HepG2 (cell line): ENCODE measurements at regions of chr2 and their contacts with region 1.

Region 1: GRCh38 chr2:201882353-201883090 is 76.2 kb downstream of the CDK15 start:
- DNase-seq: no peak
- ATAC-seq: no peak
- H3K4me3 ChIP-seq: no peak overlapping the region
- H3K27ac ChIP-seq: no peak overlapping the region
- H3K4me1 ChIP-seq: no peaks in the 10 kb centered on the region
- H3K27me3 ChIP-seq: peaks cover 2 to 14% of the 10 kb centered on the region in 2 experiments; a peak in 3 of 5 replicates
- CTCF ChIP-seq: no peak
- EP300 ChIP-seq: no peak
- POLR2A ChIP-seq: no peak
- RAD21 ChIP-seq: no peak

Region 2: DNA sequence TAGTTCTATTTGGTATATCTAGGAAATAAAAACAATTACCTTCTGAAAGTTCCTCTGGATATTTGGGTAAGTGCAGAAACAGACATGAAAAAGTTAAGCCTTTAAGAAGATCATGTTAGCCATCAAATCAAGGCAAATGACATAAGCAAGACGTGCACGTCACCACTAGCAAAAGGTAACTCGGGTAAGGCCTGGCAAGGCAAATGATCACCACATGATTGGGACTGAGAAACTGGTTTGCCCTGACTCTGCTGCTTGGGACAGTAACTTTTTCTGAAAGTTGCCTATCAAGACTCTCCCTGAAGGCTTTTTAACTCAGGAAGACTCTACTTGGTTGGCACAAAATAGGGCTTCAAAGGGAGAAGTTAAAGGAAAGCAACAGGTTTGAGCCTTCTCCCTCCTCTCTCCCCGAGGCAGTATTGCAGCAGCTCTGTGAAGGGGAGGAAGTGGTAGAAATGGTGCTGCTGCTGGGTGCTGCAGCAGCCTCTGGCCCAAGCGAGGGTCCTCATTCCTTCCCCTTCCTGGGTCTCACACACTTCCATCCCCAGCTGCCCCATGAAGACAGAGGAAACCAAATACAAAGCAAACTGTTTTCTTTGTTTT is 222.1 kb before region 1 on chr2:
- CTCF ChIA-PET with region 1: no interaction called
- POLR2A ChIA-PET with region 1: no interaction called
- in situ Hi-C with region 1: no loop called
- intact Hi-C with region 1: loop called (anchors 10 kb)
- DNase-seq: no peak
- ATAC-seq: peak; percentile 64; the same call in 2 of the 3 replicates
- H3K4me3 ChIP-seq: no peak overlapping the region
- H3K27ac ChIP-seq: no peak overlapping the region
- H3K4me1 ChIP-seq: no peaks in the 10 kb centered on the region
- H3K27me3 ChIP-seq: peaks cover 0 to 20% of the 10 kb centered on the region in 2 experiments; a peak in 3 of 5 replicates
- CTCF ChIP-seq: no peak
- EP300 ChIP-seq: no peak
- POLR2A ChIP-seq: no peak
- RAD21 ChIP-seq: no peak

Region 3: GRCh38 chr2:201807452-201807999 is 75.0 kb before region 1 on chr2:
- CTCF ChIA-PET with region 1: no interaction called
- POLR2A ChIA-PET with region 1: no interaction called
- in situ Hi-C with region 1: no loop called
- intact Hi-C with region 1: no loop called
- DNase-seq: no peak
- ATAC-seq: no peak
- H3K4me3 ChIP-seq: no peak overlapping the region
- H3K27ac ChIP-seq: no peak overlapping the region
- H3K4me1 ChIP-seq: no peaks in the 10 kb centered on the region
- H3K27me3 ChIP-seq: peaks cover 1 to 19% of the 10 kb centered on the region in 2 experiments; a peak in 3 of 5 replicates
- CTCF ChIP-seq: no peak
- EP300 ChIP-seq: no peak
- POLR2A ChIP-seq: no peak
- RAD21 ChIP-seq: no peak

Region 4: GRCh38 chr2:201839727-201840126 is 42.8 kb before region 1 on chr2:
- CTCF ChIA-PET with region 1: no interaction called
- POLR2A ChIA-PET with region 1: no interaction called
- in situ Hi-C with region 1: no loop called
- intact Hi-C with region 1: no loop called
- DNase-seq: no peak
- ATAC-seq: no peak
- H3K4me3 ChIP-seq: no peak overlapping the region
- H3K27ac ChIP-seq: no peak overlapping the region
- H3K4me1 ChIP-seq: no peaks in the 10 kb centered on the region
- H3K27me3 ChIP-seq: no peaks in the 10 kb centered on the region
- CTCF ChIP-seq: no peak
- EP300 ChIP-seq: no peak
- POLR2A ChIP-seq: no peak
- RAD21 ChIP-seq: no peak

Region 5: DNA sequence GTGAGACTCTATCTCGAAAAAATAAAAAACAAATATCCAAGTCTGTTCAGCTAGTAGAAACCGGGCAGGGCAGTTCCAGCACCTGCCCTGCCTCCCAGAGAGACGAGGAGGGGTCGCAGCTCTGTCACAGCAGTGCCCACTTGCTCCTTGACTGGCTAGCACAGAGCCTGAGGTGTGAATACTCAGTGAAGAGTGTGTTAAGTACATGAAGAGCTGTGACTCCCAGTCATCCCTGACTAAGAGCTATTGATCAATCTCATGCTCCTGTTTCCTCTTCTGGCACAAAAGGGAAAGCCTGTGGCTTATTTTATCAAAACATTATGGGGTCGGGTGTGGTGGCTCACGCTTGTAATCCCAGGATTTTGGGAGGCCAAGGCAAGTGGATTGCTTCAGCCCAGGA is 68.1 kb after region 1 on chr2:
- CTCF ChIA-PET with region 1: no interaction called
- POLR2A ChIA-PET with region 1: no interaction called
- in situ Hi-C with region 1: no loop called
- intact Hi-C with region 1: no loop called
- DNase-seq: no peak
- ATAC-seq: no peak
- H3K4me3 ChIP-seq: no peak overlapping the region
- H3K27ac ChIP-seq: no peak overlapping the region
- H3K4me1 ChIP-seq: no peaks in the 10 kb centered on the region
- H3K27me3 ChIP-seq: peaks cover 2 to 10% of the 10 kb centered on the region in 2 experiments; a peak in 2 of 5 replicates
- CTCF ChIP-seq: no peak
- EP300 ChIP-seq: no peak
- POLR2A ChIP-seq: no peak
- RAD21 ChIP-seq: no peak